Activated CD4-positive, alpha-beta memory T cell treated with anti-CD3 and anti-CD28 coated beads for 36 hours (primary cell): ENCODE measurements at regions of chr18 and their contacts with region 1.

Region 1: DNA sequence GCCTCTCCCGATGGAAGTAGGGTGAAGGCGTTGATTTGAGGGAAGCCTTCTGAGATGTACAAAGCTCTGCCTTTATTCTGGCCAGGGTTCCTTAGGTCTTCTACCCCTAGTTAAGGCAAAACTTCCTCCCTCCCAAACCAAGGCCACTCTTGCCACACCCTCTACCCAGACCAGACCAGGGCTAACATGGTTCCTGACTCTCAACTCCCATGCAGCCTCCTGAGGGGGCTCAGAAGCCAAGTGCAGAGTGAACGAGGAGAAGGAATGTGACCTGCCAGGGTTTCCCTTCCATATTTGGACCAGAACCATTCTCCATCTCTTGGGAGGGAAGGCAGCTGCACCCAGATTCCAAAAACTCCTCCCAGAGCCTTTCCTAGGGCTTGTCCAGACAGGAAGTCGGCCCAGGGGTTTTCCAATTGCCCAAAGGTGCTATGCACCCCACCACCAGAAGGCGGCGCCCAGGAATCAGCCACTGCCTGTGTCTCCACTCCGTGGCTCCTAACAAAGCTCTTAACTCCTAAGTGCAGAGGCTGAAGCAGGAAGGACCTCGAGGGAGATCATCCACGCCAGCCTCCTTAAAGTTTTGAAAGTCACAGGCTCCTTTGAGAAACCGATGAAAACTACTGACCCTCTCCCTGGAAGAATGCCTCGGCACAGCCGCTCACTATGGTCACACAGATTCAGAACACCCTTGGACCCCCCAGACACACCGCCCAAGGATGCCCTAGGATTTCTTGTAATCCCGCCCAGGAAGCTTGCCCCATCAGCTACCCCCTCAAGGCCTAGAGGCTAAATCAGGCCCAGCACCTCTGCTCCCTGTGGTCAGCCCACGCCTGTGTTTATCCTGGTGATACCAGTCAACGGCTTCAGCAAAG is 157.8 kb downstream of the SMAD2 start:
- DNase-seq: peak; percentile 73
- H3K4me3 Mint-ChIP-seq: no peak overlapping the region
- H3K27ac Mint-ChIP-seq: no peak overlapping the region
- H3K4me1 Mint-ChIP-seq: no peaks in the 10 kb centered on the region
- H3K27me3 Mint-ChIP-seq: peaks cover 13% of the 10 kb centered on the region

Region 2: DNA sequence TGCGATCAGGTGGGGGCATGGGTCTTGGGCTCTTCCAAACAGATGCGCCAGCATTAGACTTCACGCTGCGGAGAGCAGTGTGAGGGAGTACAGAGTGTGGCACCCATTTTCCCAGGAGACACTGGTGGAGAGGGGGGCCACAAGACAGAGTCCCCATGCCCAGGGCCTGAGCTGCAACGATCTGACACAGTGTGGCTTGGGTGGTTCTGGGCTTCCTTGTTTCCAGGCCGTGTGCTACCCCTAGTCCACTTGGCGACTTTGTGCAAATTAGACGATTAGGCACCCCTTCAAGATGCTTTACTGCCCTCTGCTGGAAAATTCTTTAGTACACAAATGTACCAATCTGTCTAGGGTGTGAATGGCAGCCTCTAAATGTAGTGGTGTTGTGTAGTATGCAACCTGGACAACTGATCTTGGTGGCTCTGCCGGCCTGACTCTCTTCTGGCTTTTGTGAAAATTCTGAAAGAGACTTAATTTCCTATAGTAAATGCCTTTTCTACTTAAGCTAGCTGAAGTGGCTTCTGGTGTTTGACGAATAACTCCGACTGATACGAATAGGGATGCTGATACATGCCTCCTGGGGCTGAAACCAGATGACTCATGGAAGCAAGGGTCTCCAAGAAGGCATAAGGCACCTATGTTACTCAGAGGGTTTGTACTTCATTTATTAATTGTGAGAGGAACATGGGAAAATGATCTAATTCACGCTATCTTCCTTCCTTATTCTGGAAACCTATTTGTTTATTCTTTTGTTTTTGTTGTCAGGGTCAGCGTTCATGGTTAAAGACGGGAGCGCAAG is 250.1 kb after region 1 on chr18:
- CTCF ChIA-PET with region 1: interaction called, 17 read pairs
- POLR2A ChIA-PET with region 1: no interaction called
- intact Hi-C with region 1: loop called (anchors 1 kb)
- DNase-seq: no peak
- H3K4me3 Mint-ChIP-seq: no peak overlapping the region
- H3K27ac Mint-ChIP-seq: no peak overlapping the region
- H3K4me1 Mint-ChIP-seq: peaks cover 3% of the 10 kb centered on the region
- H3K27me3 Mint-ChIP-seq: peaks cover 20% of the 10 kb centered on the region

Region 3: DNA sequence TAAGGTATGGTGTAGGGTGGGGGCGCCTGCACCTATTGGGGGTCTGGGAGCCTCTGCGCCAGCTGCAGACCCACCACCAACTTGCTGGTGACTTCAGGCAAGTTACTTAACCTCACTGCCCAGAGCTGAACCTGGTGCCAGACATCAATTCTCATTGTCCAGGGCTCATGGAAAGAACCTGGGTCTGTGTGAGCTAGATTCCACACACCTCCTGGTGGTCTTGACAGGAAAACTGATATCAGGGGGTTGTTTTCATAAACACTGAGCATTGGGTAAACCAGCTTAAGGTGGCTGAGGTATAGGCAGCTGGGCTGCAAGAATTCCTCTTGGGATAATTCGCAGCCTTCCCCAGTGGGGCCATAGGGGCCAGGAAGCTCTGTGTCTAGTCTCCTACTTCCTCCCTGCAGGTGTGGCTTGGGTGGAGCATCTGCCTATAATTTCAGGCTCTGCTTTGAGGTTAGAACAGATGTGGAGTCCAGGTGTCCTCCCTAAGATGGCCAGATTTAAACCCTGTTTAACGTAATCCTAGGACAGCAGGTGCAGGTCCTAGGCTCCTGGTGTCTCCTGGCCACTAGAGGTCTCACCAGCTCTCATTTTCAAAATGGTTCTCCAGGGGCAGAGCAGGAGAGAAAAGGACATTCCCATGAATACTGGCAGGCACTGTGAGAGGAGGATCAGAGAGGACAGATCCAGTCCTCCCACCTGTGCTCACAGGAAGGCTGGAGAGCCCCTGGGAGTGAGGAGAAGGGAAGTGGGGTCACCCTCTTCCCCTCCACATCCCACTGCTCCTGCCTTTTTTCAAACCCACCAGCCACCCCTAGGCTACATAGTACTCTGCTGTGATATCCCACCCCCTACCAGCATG is 258.2 kb after region 1 on chr18:
- CTCF ChIA-PET with region 1: interaction called, 12 read pairs
- POLR2A ChIA-PET with region 1: no interaction called
- intact Hi-C with region 1: no loop called
- DNase-seq: peak; percentile 26
- H3K4me3 Mint-ChIP-seq: no peak overlapping the region
- H3K27ac Mint-ChIP-seq: no peak overlapping the region
- H3K4me1 Mint-ChIP-seq: no peaks in the 10 kb centered on the region
- H3K27me3 Mint-ChIP-seq: no peaks in the 10 kb centered on the region